Gastrocnemius medialis (tissue), 4 donors: ENCODE measurements at regions of chr12 and their contacts with region 1.

Region 1: GRCh38 chr12:62259993-62260732 is at the start of gene USP15:
- DNase-seq: peak; percentile 93 to 96
- ATAC-seq: peak; percentile 89 to 91
- H3K4me3 ChIP-seq: peak within 1 kb of the TSS; percentile 78 to 100 (median 96)
- H3K27ac ChIP-seq: peak within 1 kb of the TSS; percentile 92 to 97 (median 94)
- H3K4me1 ChIP-seq: peaks cover 38 to 42% of the 10 kb centered on the region in 2 donors
- H3K27me3 ChIP-seq: no peaks in the 10 kb centered on the region
- CTCF ChIP-seq: peak; percentile 72 to 86 (median 81)
- POLR2A ChIP-seq: peak; percentile 73 to 74
- total RNA-seq, gene USP15: 49.0 to 93.6 (median 50.6) TPM

Region 2: GRCh38 chr12:62313727-62314380 is 53.7 kb after region 1 on chr12:
- in situ Hi-C with region 1: no loop called
- intact Hi-C with region 1: loop called (anchors 5 kb)
- DNase-seq: no peak
- ATAC-seq: peak; percentile 66 to 84
- H3K4me3 ChIP-seq: peak overlapping the region; percentile 30 to 41 (median 36)
- H3K27ac ChIP-seq: peak overlapping the region; percentile 59 to 80 (median 78)
- H3K4me1 ChIP-seq: peaks cover 23 to 29% of the 10 kb centered on the region in 2 donors
- H3K27me3 ChIP-seq: no peaks in the 10 kb centered on the region
- CTCF ChIP-seq: no peak
- POLR2A ChIP-seq: no peak

Region 3: DNA sequence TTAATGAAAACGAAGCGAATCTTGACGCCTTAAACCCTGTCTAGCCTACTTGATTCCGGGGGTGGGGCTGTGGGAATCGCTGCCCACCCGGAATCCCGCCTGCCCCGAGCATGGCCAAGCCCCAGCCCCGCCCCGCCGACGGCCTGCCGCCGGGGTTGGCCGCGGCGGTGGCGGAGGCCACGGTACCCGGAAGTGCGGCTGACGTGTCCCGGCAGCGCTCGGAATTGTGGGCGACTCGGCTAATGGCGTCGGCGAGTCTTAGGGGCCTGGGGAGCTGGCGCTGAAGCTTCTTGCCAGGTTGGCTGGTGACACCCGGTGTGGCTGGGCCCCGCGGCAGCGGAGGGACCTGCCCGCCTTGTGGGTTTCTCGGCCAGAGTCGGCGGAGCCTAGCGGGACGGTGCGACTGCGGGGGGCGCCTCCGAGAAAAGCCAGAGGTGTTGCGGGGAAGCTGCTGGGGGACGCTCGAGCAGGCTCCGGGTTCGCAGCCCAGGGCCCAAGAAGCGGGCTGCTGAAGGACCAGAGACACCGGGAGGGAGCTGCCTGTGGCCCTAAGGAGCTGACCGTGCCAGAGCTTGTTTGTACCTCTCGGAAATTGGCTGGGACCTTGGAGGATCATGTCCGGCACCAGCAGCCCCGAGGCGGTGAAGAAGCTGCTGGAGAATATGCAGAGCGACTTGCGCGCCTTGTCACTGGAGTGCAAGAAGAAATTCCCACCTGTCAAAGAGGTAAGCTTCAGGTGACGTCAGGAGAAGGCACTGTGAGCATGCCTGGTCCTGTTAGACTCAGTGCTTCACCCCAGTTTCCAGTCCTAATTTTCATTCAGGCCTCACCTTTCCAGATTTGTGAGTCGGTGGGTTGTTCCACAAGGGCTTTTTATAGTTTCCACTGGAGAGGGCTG is 206.7 kb after region 1 on chr12 and contains the start of gene MON2:
- in situ Hi-C with region 1: loop called in 1 of 4 experiments (anchors 5 kb)
- intact Hi-C with region 1: loop called (anchors 2 kb)
- DNase-seq: peak; percentile 74 to 77
- ATAC-seq: peak; percentile 94 to 98
- H3K4me3 ChIP-seq: peak within 1 kb of the TSS; percentile 84 to 95 (median 90)
- H3K27ac ChIP-seq: peak within 1 kb of the TSS; percentile 93 to 95 (median 94)
- H3K4me1 ChIP-seq: peaks cover 26 to 43% of the 10 kb centered on the region in 2 donors
- H3K27me3 ChIP-seq: no peaks in the 10 kb centered on the region
- CTCF ChIP-seq: no peak
- POLR2A ChIP-seq: peak; percentile 61 to 63
- total RNA-seq, gene MON2: 9.2 to 57.2 (median 12.9) TPM

Region 4: DNA sequence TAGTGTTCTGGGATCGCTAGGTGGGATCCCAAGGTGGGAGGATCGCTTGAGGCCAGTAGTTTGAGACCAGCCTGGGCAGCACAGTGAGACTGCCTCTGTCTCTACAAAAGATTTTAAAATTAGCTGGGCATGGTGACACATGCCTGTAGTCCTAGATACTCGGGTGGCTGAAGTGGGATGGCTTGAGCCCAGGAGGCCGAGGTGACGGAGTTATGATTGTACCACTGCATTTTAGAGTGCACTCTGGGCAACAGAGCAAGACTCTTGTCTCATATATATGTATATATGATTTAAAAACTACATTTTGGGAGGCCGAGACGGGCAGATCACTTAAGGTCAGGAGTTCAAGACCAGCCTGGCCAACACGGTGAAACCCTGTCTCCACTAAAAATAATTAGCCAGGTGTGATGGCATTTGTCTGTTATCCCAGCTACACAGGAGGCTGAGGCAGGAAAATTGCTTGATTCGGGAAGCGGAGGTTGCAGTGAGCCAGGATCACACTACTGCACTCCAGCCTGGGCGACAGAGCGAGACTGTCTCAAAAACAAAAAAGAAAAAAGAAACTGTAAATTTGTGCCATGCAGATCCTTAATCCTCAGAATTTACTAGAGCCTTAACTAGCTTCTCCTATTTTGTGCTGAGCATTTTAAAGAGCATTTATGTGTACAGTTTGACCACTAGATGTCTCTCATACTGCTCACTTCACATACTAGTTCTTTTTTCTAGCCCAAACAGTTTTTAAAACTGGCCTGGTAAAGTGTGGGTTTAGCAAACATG is 321.3 kb after region 1 on chr12:
- in situ Hi-C with region 1: loop called in 1 of 4 experiments (anchors 25 kb)
- intact Hi-C with region 1: no loop called
- DNase-seq: no peak
- ATAC-seq: peak; percentile 60 to 80
- H3K4me3 ChIP-seq: no peak overlapping the region
- H3K27ac ChIP-seq: no peak overlapping the region
- H3K4me1 ChIP-seq: no peaks in the 10 kb centered on the region
- H3K27me3 ChIP-seq: no peaks in the 10 kb centered on the region
- CTCF ChIP-seq: peak; percentile 38 to 68 (median 64)
- POLR2A ChIP-seq: no peak

Region 5: DNA sequence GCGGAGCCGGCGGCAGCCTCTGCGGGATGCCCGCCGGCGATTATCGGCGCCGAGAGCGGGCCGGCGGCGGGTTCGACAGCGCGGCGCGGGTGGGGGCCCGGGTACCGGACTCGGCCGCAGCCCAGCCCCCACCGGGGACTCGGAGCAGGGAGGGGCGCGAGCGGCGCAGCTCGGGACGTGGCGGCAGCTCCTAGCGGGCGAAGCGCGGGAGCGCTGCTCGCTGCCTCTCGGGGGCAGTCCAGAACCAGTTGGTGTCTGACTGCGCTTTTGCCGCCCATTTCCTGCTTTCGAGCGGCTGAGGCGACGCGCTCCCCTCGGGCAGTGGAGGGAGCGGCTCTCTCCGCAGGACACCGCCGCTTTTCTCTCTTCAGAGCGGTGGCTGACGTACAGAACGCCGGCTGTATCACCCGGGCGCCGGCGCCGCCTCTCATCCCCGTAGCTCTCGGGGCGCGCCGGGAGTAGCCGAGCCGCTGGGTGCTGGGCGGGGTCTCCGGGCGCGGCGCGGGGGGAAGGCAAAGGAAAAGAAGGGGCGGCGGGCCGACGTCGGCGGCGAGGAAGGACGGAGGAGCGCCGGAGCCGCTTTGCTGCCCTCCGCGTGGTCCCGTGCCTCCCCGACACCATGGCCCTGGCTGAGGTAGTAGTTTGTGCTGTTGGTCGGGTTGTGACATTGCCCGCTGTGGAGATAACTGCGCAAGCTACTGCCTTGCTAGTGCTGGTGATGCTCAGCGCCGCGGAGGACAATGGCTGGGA is 343.1 kb after region 1 on chr12:
- in situ Hi-C with region 1: loop called in 1 of 4 experiments (anchors 25 kb)
- intact Hi-C with region 1: loop called (anchors 2 kb)
- DNase-seq: peak; percentile 74 to 80
- ATAC-seq: peak; percentile 84 to 88
- H3K4me3 ChIP-seq: peak overlapping the region; percentile 77 to 86 (median 82)
- H3K27ac ChIP-seq: peak overlapping the region; percentile 94 to 98 (median 97)
- H3K4me1 ChIP-seq: peaks cover 26 to 29% of the 10 kb centered on the region in 2 donors
- H3K27me3 ChIP-seq: no peaks in the 10 kb centered on the region
- CTCF ChIP-seq: peak; percentile 45 to 73 (median 63)
- POLR2A ChIP-seq: peak; percentile 25 to 54

Region 6: GRCh38 chr12:62799126-62799736 is 539.1 kb after region 1 on chr12:
- in situ Hi-C with region 1: loop called in 2 of 4 experiments (anchors 25 kb)
- intact Hi-C with region 1: no loop called
- DNase-seq: no peak
- ATAC-seq: peak; percentile 62 to 67
- H3K4me3 ChIP-seq: no peak overlapping the region
- H3K27ac ChIP-seq: no peak overlapping the region
- H3K4me1 ChIP-seq: no peaks in the 10 kb centered on the region
- H3K27me3 ChIP-seq: no peaks in the 10 kb centered on the region
- CTCF ChIP-seq: peak; percentile 71 to 90 (median 83)
- POLR2A ChIP-seq: no peak